Mammary epithelial cell (primary cell): ENCODE measurements at regions of chr16 and their contacts with region 1.

Region 1: GRCh38 chr16:56729735-56730662 is at the start of gene NUP93:
- DNase-seq: peak; percentile 90
- H3K4me3 ChIP-seq: peak within 1 kb of the TSS; percentile 67 to 88 (median 86)
- H3K27ac ChIP-seq: peak within 1 kb of the TSS; percentile 73
- H3K4me1 ChIP-seq: peaks cover 33% of the 10 kb centered on the region
- H3K27me3 ChIP-seq: no peaks in the 10 kb centered on the region
- CTCF ChIP-seq: no peak
- total RNA-seq, gene NUP93: 49.3 to 100 TPM

Region 2: GRCh38 chr16:56356276-56357240 is 373.4 kb before region 1 on chr16:
- CTCF ChIA-PET with region 1: no interaction called
- dilution Hi-C with region 1: no loop called
- in situ Hi-C with region 1: no loop called
- intact Hi-C with region 1: no loop called
- DNase-seq: peak; percentile 67
- H3K4me3 ChIP-seq: peak overlapping the region; percentile 34 to 68 (median 46)
- H3K27ac ChIP-seq: peak overlapping the region; percentile 26
- H3K4me1 ChIP-seq: peaks cover 11% of the 10 kb centered on the region
- H3K27me3 ChIP-seq: no peaks in the 10 kb centered on the region
- CTCF ChIP-seq: peak; percentile 84 to 96

Region 3: GRCh38 chr16:56657555-56658326 is 72.3 kb before region 1 on chr16 and contains the start of gene MT1F:
- CTCF ChIA-PET with region 1: no interaction called
- dilution Hi-C with region 1: loop called (anchors 5 kb)
- in situ Hi-C with region 1: no loop called
- intact Hi-C with region 1: no loop called
- DNase-seq: peak; percentile 89
- H3K4me3 ChIP-seq: peak within 1 kb of the TSS; percentile 44 to 69 (median 65)
- H3K27ac ChIP-seq: peak within 1 kb of the TSS; percentile 6
- H3K4me1 ChIP-seq: peaks cover 17% of the 10 kb centered on the region
- H3K27me3 ChIP-seq: no peaks in the 10 kb centered on the region
- CTCF ChIP-seq: no peak
- total RNA-seq, gene MT1F: 4.2 to 8.6 TPM